T-cell (primary cell): ENCODE measurements at regions of chr2 and their contacts with region 1.

Region 1: DNA sequence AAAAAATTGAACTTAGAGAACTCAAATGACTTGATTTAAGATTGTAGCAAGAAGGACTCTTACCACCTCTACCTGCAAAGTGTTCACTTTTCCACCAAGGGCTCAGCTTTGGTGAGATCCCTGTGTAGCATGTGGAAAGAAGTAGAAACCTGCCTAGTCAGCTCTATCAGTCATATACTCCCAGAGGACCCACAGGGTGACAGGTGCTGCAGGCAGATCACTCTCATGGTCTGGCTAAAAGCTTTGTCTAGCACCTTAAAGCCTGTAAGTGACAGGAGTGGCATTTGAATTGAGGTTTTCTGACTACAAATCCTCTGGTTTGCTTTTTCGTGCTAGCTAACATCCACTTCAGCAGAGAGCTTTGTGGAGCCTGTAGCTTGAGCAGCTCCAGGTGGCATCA is 18.7 kb upstream of the NEMP2 start:
- DNase-seq: no peak
- ATAC-seq: no peak
- H3K4me3 ChIP-seq: no peak overlapping the region
- H3K4me3 Mint-ChIP-seq: no peak overlapping the region
- H3K27ac ChIP-seq: no peak overlapping the region
- H3K27ac Mint-ChIP-seq: no peak overlapping the region
- H3K4me1 ChIP-seq: peaks cover 7% of the 10 kb centered on the region in 2 experiments
- H3K4me1 Mint-ChIP-seq: peaks cover 7 to 22% (median 10%) of the 10 kb centered on the region in 3 donors
- H3K27me3 ChIP-seq: no peaks in the 10 kb centered on the region
- H3K27me3 Mint-ChIP-seq: no peaks in the 10 kb centered on the region

Region 2: DNA sequence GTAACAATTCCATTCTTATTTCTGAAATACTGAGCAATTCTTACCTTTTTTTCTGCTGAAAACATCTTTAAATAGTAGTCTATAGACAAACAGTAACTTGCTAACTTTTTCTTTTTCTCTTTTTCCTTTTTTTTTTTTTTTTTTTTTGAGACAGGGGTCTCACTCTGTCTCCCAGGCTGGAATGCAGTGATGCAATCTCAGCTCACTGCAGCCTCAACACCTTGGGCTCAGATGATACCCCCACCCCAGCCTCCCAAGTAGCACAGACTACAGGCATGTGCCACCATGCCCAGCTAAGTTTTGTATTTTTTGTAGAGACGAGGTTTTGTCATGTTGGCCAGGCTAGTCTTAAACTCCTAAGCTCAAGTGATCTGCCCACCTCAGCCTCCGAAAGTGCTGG is 102.9 kb before region 1 on chr2:
- CTCF ChIA-PET with region 1: interaction called in 1 of 2 experiments, 11 read pairs
- POLR2A ChIA-PET with region 1: no interaction called
- DNase-seq: no peak
- ATAC-seq: no peak
- H3K4me3 ChIP-seq: no peak overlapping the region
- H3K4me3 Mint-ChIP-seq: no peak overlapping the region
- H3K27ac ChIP-seq: no peak overlapping the region
- H3K27ac Mint-ChIP-seq: no peak overlapping the region
- H3K4me1 ChIP-seq: no peaks in the 10 kb centered on the region
- H3K4me1 Mint-ChIP-seq: peaks cover 57 to 71% (median 58%) of the 10 kb centered on the region in 3 donors
- H3K27me3 ChIP-seq: no peaks in the 10 kb centered on the region
- H3K27me3 Mint-ChIP-seq: no peaks in the 10 kb centered on the region

Region 3: DNA sequence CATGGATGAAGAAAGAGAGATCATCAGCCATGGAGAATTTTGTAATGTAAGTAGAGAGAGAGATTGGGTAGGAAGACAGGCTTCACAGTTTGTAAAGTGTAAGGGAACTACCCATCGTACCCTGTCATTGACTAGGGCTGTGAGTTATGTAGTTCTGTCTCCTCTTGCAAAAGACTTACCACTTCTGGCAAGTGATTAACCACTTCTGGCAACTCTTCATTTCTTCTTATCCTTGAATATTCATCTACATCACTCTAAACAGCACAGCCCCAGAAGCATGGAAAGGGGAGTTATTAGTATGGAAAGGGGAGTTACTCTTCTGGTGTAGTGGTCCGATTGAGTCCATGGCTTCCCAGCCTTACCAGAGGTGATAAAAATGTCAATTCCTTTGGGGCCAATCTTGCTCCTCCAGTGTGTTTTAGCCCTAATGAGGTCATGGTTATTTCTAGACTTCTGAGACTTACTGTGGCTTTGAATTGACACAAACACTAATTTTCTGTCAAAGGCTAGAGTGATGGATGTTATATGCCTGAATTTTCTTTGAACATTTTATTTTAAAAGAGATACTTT is 408.7 kb after region 1 on chr2:
- CTCF ChIA-PET with region 1: no interaction called
- POLR2A ChIA-PET with region 1: no interaction called
- DNase-seq: no peak
- ATAC-seq: peak in 1 of 4 experiments; percentile 21
- H3K4me3 ChIP-seq: no peak overlapping the region
- H3K4me3 Mint-ChIP-seq: no peak overlapping the region
- H3K27ac ChIP-seq: no peak overlapping the region
- H3K27ac Mint-ChIP-seq: peak overlapping the region; percentile 58 to 66
- H3K4me1 ChIP-seq: peaks cover 0 to 3% of the 10 kb centered on the region in 2 experiments
- H3K4me1 Mint-ChIP-seq: peaks cover 36 to 59% (median 41%) of the 10 kb centered on the region in 3 donors
- H3K27me3 ChIP-seq: no peaks in the 10 kb centered on the region
- H3K27me3 Mint-ChIP-seq: no peaks in the 10 kb centered on the region